CD14-positive monocyte (primary cell): ENCODE measurements at regions of chr1 and their contacts with region 1.

Region 1: DNA sequence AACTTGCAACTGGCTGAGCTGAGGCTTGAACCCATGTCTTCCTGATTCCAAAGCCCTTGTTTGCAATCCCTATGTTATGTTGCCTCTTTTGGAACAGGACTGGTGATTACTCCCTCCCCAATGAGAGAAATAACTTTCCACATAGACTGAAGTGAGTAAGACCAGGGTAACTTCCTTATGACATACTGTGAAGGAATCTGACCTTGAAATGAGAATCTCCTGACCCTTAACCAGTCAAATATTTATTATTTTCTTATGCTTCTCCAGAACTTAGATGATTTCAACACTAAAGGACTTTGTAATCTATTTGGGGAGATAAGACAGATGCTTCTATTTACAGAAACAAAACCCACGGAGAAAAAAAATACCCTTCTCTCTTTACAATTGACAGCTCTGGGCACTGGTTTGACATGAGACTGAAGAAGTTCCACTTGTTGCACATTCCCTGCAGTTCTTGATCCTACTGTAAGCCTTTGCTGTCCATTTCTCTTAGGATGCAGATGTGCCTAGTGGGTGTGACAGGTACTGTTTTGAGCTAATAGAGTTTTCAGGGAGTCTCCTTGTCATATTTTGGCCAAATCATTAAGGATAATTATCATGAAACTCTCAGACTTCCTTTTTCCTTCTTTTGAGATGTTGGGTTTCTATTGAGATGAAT is 3.9 kb upstream of the RPTN start:
- DNase-seq: peak; percentile 43 to 65 (median 57)
- H3K4me3 ChIP-seq: no peak overlapping the region
- H3K4me3 Mint-ChIP-seq: no peak overlapping the region
- H3K27ac ChIP-seq: no peak overlapping the region
- H3K27ac Mint-ChIP-seq: peak overlapping the region; percentile 35 to 81 (median 59)
- H3K4me1 ChIP-seq: peaks cover 87 to 92% of the 10 kb centered on the region in 2 donors
- H3K4me1 Mint-ChIP-seq: peaks cover 78% of the 10 kb centered on the region
- H3K27me3 ChIP-seq: no peaks in the 10 kb centered on the region
- H3K27me3 Mint-ChIP-seq: peaks cover 0 to 4% (median 0%) of the 10 kb centered on the region in 3 donors
- CTCF ChIP-seq: no peak

Region 2: DNA sequence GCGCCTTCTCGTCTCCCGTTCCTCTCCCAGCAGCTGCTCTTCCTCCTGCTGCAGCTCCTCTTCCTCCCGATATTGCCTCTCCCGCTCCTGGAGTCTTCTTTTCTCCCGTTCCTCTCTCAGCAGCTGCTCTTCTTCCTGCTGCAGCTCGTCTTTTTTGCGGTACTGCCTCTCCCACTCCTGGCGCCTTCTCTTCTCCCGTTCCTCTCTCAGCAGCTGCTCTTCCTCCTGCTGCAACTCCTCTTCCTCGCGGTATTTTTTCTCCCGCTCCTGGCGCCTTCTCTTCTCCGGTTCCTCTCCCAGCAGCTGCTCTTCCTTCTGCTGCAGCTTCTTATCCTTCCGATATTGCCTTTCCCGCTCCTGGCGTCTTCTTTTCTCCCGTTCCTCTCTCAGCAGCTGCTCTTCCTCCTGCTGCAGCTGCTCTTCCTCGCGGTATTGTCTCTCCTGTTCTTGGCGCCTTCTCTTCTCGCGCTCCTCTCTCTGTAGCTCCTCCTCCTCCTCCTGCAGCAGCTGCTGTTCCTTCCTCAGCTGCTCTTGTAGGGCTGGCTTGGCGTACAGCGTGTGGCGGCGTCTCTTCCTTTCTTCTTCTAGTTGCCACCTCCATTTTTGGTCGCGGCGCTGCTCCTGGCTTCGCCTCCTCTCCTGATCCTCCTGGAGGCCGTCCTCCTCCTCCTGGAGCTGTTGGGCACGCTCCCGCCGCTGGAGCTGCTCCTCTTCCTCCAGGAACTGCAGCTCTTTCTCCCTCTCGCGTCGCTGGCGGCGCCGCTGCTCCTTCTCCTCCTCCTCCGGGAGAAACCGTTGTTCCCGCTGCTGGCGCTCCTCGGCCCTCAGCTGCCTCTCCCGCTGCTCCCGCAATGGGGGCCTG is 52.7 kb before region 1 on chr1:
- intact Hi-C with region 1: loop called in 1 of 2 experiments (anchors 5 kb)
- DNase-seq: peak; percentile 22 to 38 (median 26)
- H3K4me3 ChIP-seq: peak overlapping the region; percentile 23 to 82 (median 46)
- H3K4me3 Mint-ChIP-seq: no peak overlapping the region
- H3K27ac ChIP-seq: no peak overlapping the region
- H3K27ac Mint-ChIP-seq: no peak overlapping the region
- H3K4me1 ChIP-seq: peaks cover 59% of the 10 kb centered on the region in 2 donors
- H3K4me1 Mint-ChIP-seq: no peaks in the 10 kb centered on the region
- H3K27me3 ChIP-seq: peaks cover 69 to 98% of the 10 kb centered on the region in 2 donors
- H3K27me3 Mint-ChIP-seq: peaks cover 7 to 13% (median 8%) of the 10 kb centered on the region in 3 donors
- CTCF ChIP-seq: no peak

Region 3: DNA sequence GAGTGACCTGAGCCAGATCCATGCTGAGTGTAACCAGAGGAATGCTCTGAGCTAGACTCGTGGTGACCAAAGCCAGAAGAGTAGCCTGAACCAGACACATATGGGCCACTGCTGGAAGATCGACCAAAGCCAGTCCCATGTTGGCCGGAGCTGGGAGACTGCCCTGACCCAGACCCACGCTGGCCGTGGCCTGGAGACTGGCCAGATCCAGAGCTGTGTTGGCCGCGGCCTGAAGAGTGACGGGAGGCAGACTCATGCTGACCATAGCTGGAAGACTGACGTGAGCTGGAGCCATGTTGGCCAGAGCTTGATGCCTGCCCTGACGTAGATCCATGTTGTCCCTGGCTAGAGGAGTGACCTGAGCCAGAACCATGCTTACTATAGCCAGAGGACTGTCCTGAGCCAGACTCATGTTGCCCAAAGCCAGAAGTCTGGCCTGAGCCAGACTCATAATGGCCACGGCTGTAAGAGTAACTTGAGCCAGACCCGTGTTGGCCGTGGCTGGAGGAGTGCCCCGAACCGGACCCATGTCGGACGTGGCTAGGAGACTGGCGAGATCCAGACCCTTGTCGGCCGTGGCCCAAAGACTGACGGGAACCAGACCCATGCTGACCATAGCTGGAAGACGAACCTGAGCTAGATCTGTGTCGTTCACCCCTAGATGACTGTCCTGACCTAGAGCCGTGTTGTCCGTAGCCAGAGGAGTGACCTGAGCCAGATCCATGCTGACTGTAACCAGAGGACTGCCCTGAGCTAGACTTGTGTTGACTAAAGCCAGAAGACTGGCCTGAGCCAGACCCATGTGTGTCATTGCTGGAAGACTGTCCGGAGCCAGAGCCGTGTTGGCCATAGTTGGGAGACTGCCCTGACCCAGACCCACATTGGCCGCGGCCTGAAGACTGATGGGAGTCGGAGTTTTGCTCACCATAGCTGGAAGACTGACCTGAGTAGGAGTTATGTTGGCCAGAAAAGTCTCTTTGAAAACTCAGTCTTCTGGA is 57.5 kb after region 1 on chr1:
- intact Hi-C with region 1: no loop called
- DNase-seq: no peak
- H3K4me3 ChIP-seq: no peak overlapping the region
- H3K4me3 Mint-ChIP-seq: no peak overlapping the region
- H3K27ac ChIP-seq: no peak overlapping the region
- H3K27ac Mint-ChIP-seq: peak overlapping the region in 1 of 7 donors; percentile 59
- H3K4me1 ChIP-seq: no peaks in the 10 kb centered on the region
- H3K4me1 Mint-ChIP-seq: no peaks in the 10 kb centered on the region
- H3K27me3 ChIP-seq: no peaks in the 10 kb centered on the region
- H3K27me3 Mint-ChIP-seq: peaks cover 0 to 2% (median 0%) of the 10 kb centered on the region in 3 donors
- CTCF ChIP-seq: no peak